CD4-positive, alpha-beta T cell (primary cell): ENCODE measurements at regions of chr14 and their contacts with region 1.

Region 1: GRCh38 chr14:56339855-56340701 is 221.9 kb downstream of the PELI2 start:
- DNase-seq: peak; percentile 6 to 70 (median 42)
- ATAC-seq: peak; percentile 58
- H3K4me3 ChIP-seq: no peak overlapping the region
- H3K4me3 Mint-ChIP-seq: no peak overlapping the region
- H3K27ac ChIP-seq: no peak overlapping the region
- H3K27ac Mint-ChIP-seq: no peak overlapping the region
- H3K4me1 ChIP-seq: no peaks in the 10 kb centered on the region
- H3K4me1 Mint-ChIP-seq: no peaks in the 10 kb centered on the region
- H3K27me3 ChIP-seq: no peaks in the 10 kb centered on the region
- H3K27me3 Mint-ChIP-seq: no peaks in the 10 kb centered on the region
- CTCF ChIP-seq: peak; percentile 63

Region 2: DNA sequence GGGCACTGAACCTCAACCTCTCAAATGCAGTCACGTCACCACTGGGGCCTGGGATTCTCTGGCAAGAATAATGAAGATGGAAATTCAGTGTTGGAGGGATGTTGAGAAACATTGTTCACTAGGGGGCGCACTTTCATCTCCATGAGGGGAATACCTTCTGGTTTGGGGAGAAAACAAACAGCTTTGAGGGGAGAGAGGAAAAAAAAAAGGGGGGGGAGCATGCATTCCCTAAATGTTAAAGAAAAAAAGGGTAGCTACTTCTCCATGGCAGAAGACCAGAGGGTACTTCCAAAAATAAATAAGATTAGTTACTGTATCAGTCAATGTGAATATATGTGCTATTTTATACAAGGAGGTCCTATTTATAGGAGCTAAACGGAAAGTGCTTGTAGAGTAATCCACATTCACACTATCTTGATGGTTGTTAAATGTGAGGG is 893.8 kb before region 1 on chr14:
- CTCF ChIA-PET with region 1: interaction called, 4 read pairs
- POLR2A ChIA-PET with region 1: no interaction called
- intact Hi-C with region 1: loop called in 1 of 2 experiments (anchors 5 kb)
- DNase-seq: peak; percentile 12 to 80 (median 36)
- ATAC-seq: no peak
- H3K4me3 ChIP-seq: no peak overlapping the region
- H3K4me3 Mint-ChIP-seq: no peak overlapping the region
- H3K27ac ChIP-seq: no peak overlapping the region
- H3K27ac Mint-ChIP-seq: no peak overlapping the region
- H3K4me1 ChIP-seq: no peaks in the 10 kb centered on the region
- H3K4me1 Mint-ChIP-seq: no peaks in the 10 kb centered on the region
- H3K27me3 ChIP-seq: no peaks in the 10 kb centered on the region
- H3K27me3 Mint-ChIP-seq: no peaks in the 10 kb centered on the region
- CTCF ChIP-seq: peak; percentile 68

Region 3: DNA sequence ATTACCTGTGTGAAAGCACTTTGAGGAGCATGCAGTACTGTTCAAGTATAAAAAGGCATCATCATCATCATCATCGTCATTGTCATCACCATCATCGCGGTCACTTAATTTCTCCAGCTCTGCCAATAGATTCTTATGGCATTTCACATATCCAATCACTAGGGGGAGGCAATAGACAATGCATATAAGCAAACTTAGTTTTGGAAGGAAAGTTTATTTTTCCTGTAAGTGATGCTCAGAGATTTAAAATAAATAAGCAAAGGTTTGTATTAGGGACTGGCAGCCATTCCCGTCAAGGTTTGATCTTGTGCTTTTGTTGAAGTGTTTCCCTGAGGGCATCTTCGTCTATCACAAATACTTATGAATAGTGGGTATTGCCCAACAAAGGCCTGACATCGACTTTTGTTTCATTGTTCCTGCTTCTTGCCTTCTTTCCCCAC is 632.7 kb before region 1 on chr14:
- CTCF ChIA-PET with region 1: interaction called, 6 read pairs
- POLR2A ChIA-PET with region 1: no interaction called
- intact Hi-C with region 1: loop called (anchors 2 to 10 kb)
- DNase-seq: peak in 3 of 14 experiments; percentile 22 to 34 (median 34)
- ATAC-seq: no peak
- H3K4me3 ChIP-seq: no peak overlapping the region
- H3K4me3 Mint-ChIP-seq: no peak overlapping the region
- H3K27ac ChIP-seq: no peak overlapping the region
- H3K27ac Mint-ChIP-seq: no peak overlapping the region
- H3K4me1 ChIP-seq: no peaks in the 10 kb centered on the region
- H3K4me1 Mint-ChIP-seq: no peaks in the 10 kb centered on the region
- H3K27me3 ChIP-seq: no peaks in the 10 kb centered on the region
- H3K27me3 Mint-ChIP-seq: no peaks in the 10 kb centered on the region
- CTCF ChIP-seq: peak; percentile 44

Region 4: GRCh38 chr14:55731881-55732498 is 608.1 kb before region 1 on chr14:
- CTCF ChIA-PET with region 1: interaction called, 5 read pairs
- POLR2A ChIA-PET with region 1: interaction called, 4 read pairs
- intact Hi-C with region 1: loop called (anchors 1 to 2 kb)
- DNase-seq: peak; percentile 9 to 69 (median 44)
- ATAC-seq: no peak
- H3K4me3 ChIP-seq: no peak overlapping the region
- H3K4me3 Mint-ChIP-seq: no peak overlapping the region
- H3K27ac ChIP-seq: no peak overlapping the region
- H3K27ac Mint-ChIP-seq: no peak overlapping the region
- H3K4me1 ChIP-seq: no peaks in the 10 kb centered on the region
- H3K4me1 Mint-ChIP-seq: no peaks in the 10 kb centered on the region
- H3K27me3 ChIP-seq: no peaks in the 10 kb centered on the region
- H3K27me3 Mint-ChIP-seq: no peaks in the 10 kb centered on the region
- CTCF ChIP-seq: peak; percentile 54

Region 5: GRCh38 chr14:56378475-56378877 is 38.4 kb after region 1 on chr14:
- CTCF ChIA-PET with region 1: no interaction called
- POLR2A ChIA-PET with region 1: no interaction called
- intact Hi-C with region 1: no loop called
- DNase-seq: peak in 2 of 14 experiments; percentile 11 to 31
- ATAC-seq: no peak
- H3K4me3 ChIP-seq: no peak overlapping the region
- H3K4me3 Mint-ChIP-seq: no peak overlapping the region
- H3K27ac ChIP-seq: no peak overlapping the region
- H3K27ac Mint-ChIP-seq: no peak overlapping the region
- H3K4me1 ChIP-seq: no peaks in the 10 kb centered on the region
- H3K4me1 Mint-ChIP-seq: no peaks in the 10 kb centered on the region
- H3K27me3 ChIP-seq: no peaks in the 10 kb centered on the region
- H3K27me3 Mint-ChIP-seq: no peaks in the 10 kb centered on the region
- CTCF ChIP-seq: no peak